GM12878 (cell line): ENCODE measurements at regions of chr9 and their contacts with region 1.

Region 1: GRCh38 chr9:122099271-122099869 is 6.3 kb upstream of the TTLL11 start:
- DNase-seq: no peak
- ATAC-seq: peak; percentile 94
- H3K4me3 ChIP-seq: no peak overlapping the region
- H3K27ac ChIP-seq: no peak overlapping the region
- H3K4me1 ChIP-seq: no peaks in the 10 kb centered on the region
- H3K27me3 ChIP-seq: no peaks in the 10 kb centered on the region; a peak in 1 of 4 replicates
- CTCF ChIP-seq: peak; percentile 72 to 87 (median 75)
- EP300 ChIP-seq: no peak
- POLR2A ChIP-seq: no peak
- RAD21 ChIP-seq: peak; percentile 75

Region 2: GRCh38 chr9:121954477-121955140 is 144.8 kb before region 1 on chr9:
- CTCF ChIA-PET with region 1: no interaction called
- POLR2A ChIA-PET with region 1: no interaction called
- RAD21 ChIA-PET with region 1: no interaction called
- SMC1A ChIA-PET with region 1: no interaction called
- in situ Hi-C with region 1: no loop called
- intact Hi-C with region 1: no loop called
- DNase-seq: no peak
- ATAC-seq: no peak
- H3K4me3 ChIP-seq: no peak overlapping the region
- H3K27ac ChIP-seq: no peak overlapping the region
- H3K4me1 ChIP-seq: no peaks in the 10 kb centered on the region
- H3K27me3 ChIP-seq: peaks cover 0 to 6% of the 10 kb centered on the region in 2 experiments; a peak in 2 of 4 replicates
- CTCF ChIP-seq: no peak
- EP300 ChIP-seq: no peak
- POLR2A ChIP-seq: no peak
- RAD21 ChIP-seq: no peak

Region 3: GRCh38 chr9:122087406-122088200 is 11.8 kb before region 1 on chr9:
- CTCF ChIA-PET with region 1: interaction called, 32 read pairs
- POLR2A ChIA-PET with region 1: no interaction called
- RAD21 ChIA-PET with region 1: no interaction called
- SMC1A ChIA-PET with region 1: interaction called, 4 read pairs
- in situ Hi-C with region 1: no loop called
- intact Hi-C with region 1: no loop called
- DNase-seq: no peak
- ATAC-seq: no peak
- H3K4me3 ChIP-seq: no peak overlapping the region
- H3K27ac ChIP-seq: no peak overlapping the region
- H3K4me1 ChIP-seq: peaks cover 2% of the 10 kb centered on the region; the same call in 1 of the 2 replicates
- H3K27me3 ChIP-seq: no peaks in the 10 kb centered on the region
- CTCF ChIP-seq: no peak
- EP300 ChIP-seq: no peak
- POLR2A ChIP-seq: no peak
- RAD21 ChIP-seq: no peak

Region 4: GRCh38 chr9:122125158-122125508 is 25.8 kb after region 1 on chr9:
- CTCF ChIA-PET with region 1: interaction called, 163 read pairs
- POLR2A ChIA-PET with region 1: no interaction called
- RAD21 ChIA-PET with region 1: interaction called, 76 read pairs
- SMC1A ChIA-PET with region 1: interaction called, 41 read pairs
- in situ Hi-C with region 1: no loop called
- intact Hi-C with region 1: loop called (anchors 1 kb)
- DNase-seq: no peak
- ATAC-seq: peak; percentile 93
- H3K4me3 ChIP-seq: no peak overlapping the region
- H3K27ac ChIP-seq: no peak overlapping the region
- H3K4me1 ChIP-seq: no peaks in the 10 kb centered on the region
- H3K27me3 ChIP-seq: peaks cover 2 to 10% of the 10 kb centered on the region in 2 experiments; a peak in 2 of 4 replicates
- CTCF ChIP-seq: peak; percentile 89 to 92 (median 91)
- EP300 ChIP-seq: no peak
- POLR2A ChIP-seq: no peak
- RAD21 ChIP-seq: peak; percentile 97

Region 5: GRCh38 chr9:122350638-122351355 is 251.4 kb after region 1 on chr9:
- CTCF ChIA-PET with region 1: interaction called, 74 read pairs
- POLR2A ChIA-PET with region 1: no interaction called
- RAD21 ChIA-PET with region 1: interaction called, 40 read pairs
- SMC1A ChIA-PET with region 1: interaction called, 27 read pairs
- in situ Hi-C with region 1: no loop called
- intact Hi-C with region 1: loop called (anchors 1 kb)
- DNase-seq: no peak
- ATAC-seq: peak; percentile 98
- H3K4me3 ChIP-seq: no peak overlapping the region
- H3K27ac ChIP-seq: no peak overlapping the region
- H3K4me1 ChIP-seq: no peaks in the 10 kb centered on the region; the same call in 1 of the 2 replicates
- H3K27me3 ChIP-seq: peaks cover 2 to 8% of the 10 kb centered on the region in 2 experiments; a peak in 2 of 4 replicates
- CTCF ChIP-seq: peak; percentile 93 to 97 (median 93); a peak in 5 of 6 replicates
- EP300 ChIP-seq: no peak
- POLR2A ChIP-seq: no peak
- RAD21 ChIP-seq: peak; percentile 98

Region 6: GRCh38 chr9:122464633-122465567 is 365.5 kb after region 1 on chr9:
- CTCF ChIA-PET with region 1: interaction called, 20 read pairs
- POLR2A ChIA-PET with region 1: no interaction called
- RAD21 ChIA-PET with region 1: no interaction called
- SMC1A ChIA-PET with region 1: interaction called, 3 read pairs
- in situ Hi-C with region 1: no loop called
- intact Hi-C with region 1: no loop called
- DNase-seq: peak; percentile 45
- ATAC-seq: peak; percentile 84
- H3K4me3 ChIP-seq: peak overlapping the region; percentile 54; the same call in 1 of the 2 replicates
- H3K27ac ChIP-seq: peak overlapping the region; percentile 4; the same call in 1 of the 2 replicates
- H3K4me1 ChIP-seq: no peaks in the 10 kb centered on the region
- H3K27me3 ChIP-seq: no peaks in the 10 kb centered on the region; a peak in 1 of 4 replicates
- CTCF ChIP-seq: peak; percentile 76 to 81 (median 79)
- EP300 ChIP-seq: no peak
- POLR2A ChIP-seq: no peak
- RAD21 ChIP-seq: peak; percentile 77

Region 7: DNA sequence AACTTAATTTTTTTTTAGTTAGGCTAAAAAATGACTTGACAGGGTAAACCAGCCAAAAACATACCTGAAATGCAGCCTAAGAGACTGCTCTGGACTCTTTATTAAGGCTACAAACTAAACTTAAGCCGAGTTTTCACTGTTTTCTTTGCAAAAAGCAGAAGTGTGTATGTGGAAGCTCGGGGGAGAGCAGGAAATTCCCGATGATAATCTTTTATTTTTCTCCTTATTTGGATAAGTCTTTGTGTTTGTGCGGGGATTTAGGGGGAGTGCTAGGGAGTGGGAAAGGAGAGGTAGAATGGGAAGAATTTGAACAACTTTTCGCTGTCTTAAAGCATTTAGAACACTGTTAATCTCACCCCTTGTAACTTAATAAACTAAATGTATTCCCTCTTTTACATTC is 903.4 kb after region 1 on chr9:
- CTCF ChIA-PET with region 1: no interaction called
- POLR2A ChIA-PET with region 1: no interaction called
- RAD21 ChIA-PET with region 1: no interaction called
- SMC1A ChIA-PET with region 1: no interaction called
- in situ Hi-C with region 1: no loop called
- intact Hi-C with region 1: no loop called
- DNase-seq: no peak
- ATAC-seq: no peak
- H3K4me3 ChIP-seq: no peak overlapping the region
- H3K27ac ChIP-seq: peak overlapping the region; percentile 24; the same call in 1 of the 2 replicates
- H3K4me1 ChIP-seq: no peaks in the 10 kb centered on the region
- H3K27me3 ChIP-seq: no peaks in the 10 kb centered on the region
- CTCF ChIP-seq: no peak
- EP300 ChIP-seq: no peak
- POLR2A ChIP-seq: no peak
- RAD21 ChIP-seq: no peak